ENCODE measurements at regions of chr2 and their contacts with region 1.

Region 1: GRCh38 chr2:239000500-239001073 is 152.7 kb downstream of the TWIST2 start:
- DNase-seq: no peak
- H3K4me3 ChIP-seq: no peak overlapping the region
- H3K27ac ChIP-seq: no peak overlapping the region
- H3K4me1 ChIP-seq: peaks cover 7% of the 10 kb centered on the region
- H3K27me3 ChIP-seq: peaks cover 97% of the 10 kb centered on the region
- CTCF ChIP-seq: no peak

Region 2: DNA sequence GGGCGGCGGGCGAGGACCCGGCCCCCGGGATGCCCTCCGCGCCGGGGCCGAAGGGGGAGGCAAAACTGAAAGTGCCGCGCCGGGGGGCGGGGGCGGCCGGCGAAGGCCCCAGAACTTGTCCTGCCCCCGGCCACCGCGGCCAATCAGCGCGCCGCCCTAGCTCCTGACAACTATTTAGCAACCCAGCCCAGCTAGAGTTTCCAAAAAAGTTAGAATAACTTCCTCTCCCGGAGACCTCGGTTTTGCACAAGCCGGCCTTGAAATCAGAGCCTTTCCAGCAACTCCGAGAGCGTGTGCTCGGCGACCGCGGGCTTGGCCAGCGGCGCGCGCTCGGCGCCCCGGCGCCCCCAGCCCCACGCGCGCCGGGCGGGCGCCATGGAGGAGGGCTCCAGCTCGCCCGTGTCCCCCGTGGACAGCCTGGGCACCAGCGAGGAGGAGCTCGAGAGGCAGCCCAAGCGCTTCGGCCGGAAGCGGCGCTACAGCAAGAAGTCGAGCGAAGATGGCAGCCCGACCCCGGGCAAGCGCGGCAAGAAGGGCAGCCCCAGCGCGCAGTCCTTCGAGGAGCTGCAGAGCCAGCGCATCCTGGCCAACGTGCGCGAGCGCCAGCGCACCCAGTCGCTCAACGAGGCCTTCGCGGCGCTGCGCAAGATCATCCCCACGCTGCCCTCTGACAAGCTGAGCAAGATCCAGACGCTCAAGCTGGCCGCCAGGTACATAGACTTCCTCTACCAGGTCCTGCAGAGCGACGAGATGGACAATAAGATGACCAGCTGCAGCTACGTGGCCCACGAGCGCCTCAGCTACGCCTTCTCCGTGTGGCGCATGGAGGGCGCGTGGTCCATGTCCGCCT is 152.5 kb before region 1 on chr2 and contains the start of gene TWIST2:
- CTCF ChIA-PET with region 1: no interaction called
- POLR2A ChIA-PET with region 1: no interaction called
- intact Hi-C with region 1: no loop called
- DNase-seq: peak in 1 of 2 experiments; percentile 68
- H3K4me3 ChIP-seq: no peak within 1 kb of the TSS
- H3K27ac ChIP-seq: no peak within 1 kb of the TSS
- H3K4me1 ChIP-seq: no peaks in the 10 kb centered on the region
- H3K27me3 ChIP-seq: peaks cover 46% of the 10 kb centered on the region
- CTCF ChIP-seq: no peak
- total RNA-seq, gene TWIST2: 4.1 and 5.0 TPM in 2 replicates

Region 3: DNA sequence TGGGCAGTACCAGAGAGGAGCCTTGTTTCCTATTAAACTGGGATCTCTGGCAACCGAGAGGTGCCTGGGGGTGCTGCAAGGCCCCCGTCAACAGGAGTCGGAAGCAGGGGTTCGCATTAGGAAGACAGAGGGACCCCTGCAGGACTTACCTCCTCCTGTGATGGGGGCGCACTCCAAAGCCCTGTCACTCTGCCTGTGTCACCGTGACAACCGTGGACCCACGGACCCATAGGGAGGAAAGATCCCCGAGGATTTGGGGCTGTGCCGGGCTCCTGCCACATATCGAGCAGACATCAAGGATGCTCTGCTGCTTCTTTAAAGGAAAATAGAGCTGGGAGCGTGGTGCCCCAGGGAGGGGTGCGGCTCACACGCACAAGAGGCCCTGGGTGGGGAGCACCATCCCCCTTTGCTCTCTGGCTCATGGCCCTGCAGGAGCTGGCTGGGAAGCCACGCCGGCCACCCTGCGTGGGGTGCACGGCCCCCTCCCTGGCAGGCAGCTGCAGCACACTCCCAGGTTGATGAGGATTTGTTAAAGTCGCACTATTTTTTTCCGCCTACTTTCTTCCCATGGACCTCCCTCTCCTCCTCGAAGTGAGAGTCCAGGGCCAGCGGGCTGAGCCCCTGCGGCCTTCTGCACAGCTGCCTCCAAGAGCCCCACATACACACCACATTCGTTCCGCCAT is 14.8 kb after region 1 on chr2:
- CTCF ChIA-PET with region 1: no interaction called
- POLR2A ChIA-PET with region 1: no interaction called
- intact Hi-C with region 1: no loop called
- DNase-seq: no peak
- H3K4me3 ChIP-seq: no peak overlapping the region
- H3K27ac ChIP-seq: no peak overlapping the region
- H3K4me1 ChIP-seq: no peaks in the 10 kb centered on the region
- H3K27me3 ChIP-seq: peaks cover 100% of the 10 kb centered on the region
- CTCF ChIP-seq: no peak

Region 4: GRCh38 chr2:239125726-239126675 is 125.4 kb after region 1 on chr2:
- CTCF ChIA-PET with region 1: no interaction called
- POLR2A ChIA-PET with region 1: interaction called, 11 read pairs
- intact Hi-C with region 1: no loop called
- DNase-seq: no peak
- H3K4me3 ChIP-seq: no peak overlapping the region
- H3K27ac ChIP-seq: no peak overlapping the region
- H3K4me1 ChIP-seq: no peaks in the 10 kb centered on the region
- H3K27me3 ChIP-seq: no peaks in the 10 kb centered on the region
- CTCF ChIP-seq: no peak